Activated T-helper 1 cell treated with anti-CD3 and anti-CD28 coated beads, Interleukin-12 subunit alpha, Interleukin-12 subunit beta, Interleukin-2, Interleukin-4 antibody, amounts not matched to agents 30 ng/mL and 10 ng/mL and 1 ng/mL, durations not matched to agents 14 hours and 24 hours and 36 hours (primary cell): ENCODE measurements at regions of chr2 and their contacts with region 1.

Region 1: GRCh38 chr2:39124000-39124745 is 3.3 kb upstream of the SOS1 start:
- DNase-seq: peak; percentile 94
- H3K4me3 Mint-ChIP-seq: peak overlapping the region; percentile 99
- H3K27ac Mint-ChIP-seq: peak overlapping the region; percentile 100
- H3K4me1 Mint-ChIP-seq: peaks cover 67% of the 10 kb centered on the region
- H3K27me3 Mint-ChIP-seq: no peaks in the 10 kb centered on the region

Region 2: DNA sequence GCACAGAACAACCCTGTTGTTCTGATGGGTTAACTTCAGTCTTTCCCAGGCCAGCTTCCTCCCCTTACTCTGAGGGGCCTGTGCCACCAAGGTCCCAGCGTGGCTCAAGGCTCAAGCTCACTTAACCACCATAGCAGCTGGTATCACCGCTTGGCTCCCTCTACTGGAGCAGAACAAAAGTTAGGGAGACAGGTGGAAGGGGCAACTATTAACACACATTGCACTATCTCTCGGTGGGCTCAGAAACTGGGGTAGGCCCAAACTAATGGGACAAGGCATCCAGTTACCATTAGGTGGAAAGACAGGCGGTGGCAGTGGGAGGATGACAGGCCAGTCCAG is 658.4 kb before region 1 on chr2:
- intact Hi-C with region 1: no loop called
- DNase-seq: no peak
- H3K4me3 Mint-ChIP-seq: no peak overlapping the region
- H3K27ac Mint-ChIP-seq: no peak overlapping the region
- H3K4me1 Mint-ChIP-seq: peaks cover 10% of the 10 kb centered on the region
- H3K27me3 Mint-ChIP-seq: peaks cover 10% of the 10 kb centered on the region

Region 3: GRCh38 chr2:38535744-38536506 is 588.2 kb before region 1 on chr2:
- intact Hi-C with region 1: loop called (anchors 5 kb)
- DNase-seq: peak; percentile 72
- H3K4me3 Mint-ChIP-seq: peak overlapping the region; percentile 67
- H3K27ac Mint-ChIP-seq: no peak overlapping the region
- H3K4me1 Mint-ChIP-seq: no peaks in the 10 kb centered on the region
- H3K27me3 Mint-ChIP-seq: peaks cover 14% of the 10 kb centered on the region

Region 4: DNA sequence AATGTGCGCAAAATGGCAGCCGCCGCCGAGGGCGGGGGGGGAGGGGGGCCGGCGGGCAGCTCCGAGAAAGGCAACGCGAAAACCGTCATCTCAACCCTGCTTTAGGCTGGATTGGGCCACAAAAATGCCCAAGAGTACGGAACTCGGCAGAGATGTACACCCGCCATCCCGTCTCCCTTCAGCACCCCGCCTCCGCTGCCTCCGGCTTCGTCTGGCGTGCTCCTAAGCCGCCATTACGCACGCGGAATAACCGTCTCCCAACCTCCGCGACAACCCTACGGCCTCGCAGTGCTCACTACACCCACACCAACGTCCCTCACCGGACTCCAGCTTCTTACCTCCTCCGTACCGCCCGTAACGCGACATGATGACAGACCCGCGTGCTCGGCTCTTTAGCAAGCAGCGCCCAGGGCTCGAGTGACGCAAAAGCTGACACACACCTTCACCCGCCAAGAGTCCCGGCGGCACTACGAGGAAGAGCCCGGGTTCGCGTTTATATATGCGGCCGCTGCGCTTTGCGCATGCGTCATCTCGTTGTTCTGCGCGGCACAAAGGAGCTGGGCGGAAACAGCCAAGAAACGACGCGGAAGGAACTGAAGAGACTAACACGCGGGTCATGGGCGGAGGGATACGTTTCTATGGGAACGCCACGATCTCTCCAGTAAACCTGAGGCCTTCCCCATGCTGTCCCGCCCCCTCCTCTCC is 373.1 kb before region 1 on chr2 and contains the start of gene SRSF7:
- intact Hi-C with region 1: loop called (anchors 2 kb)
- DNase-seq: peak; percentile 96
- H3K4me3 Mint-ChIP-seq: peak within 1 kb of the TSS; percentile 98
- H3K27ac Mint-ChIP-seq: peak within 1 kb of the TSS; percentile 100
- H3K4me1 Mint-ChIP-seq: peaks cover 54% of the 10 kb centered on the region
- H3K27me3 Mint-ChIP-seq: no peaks in the 10 kb centered on the region
- total RNA-seq, gene SRSF7: 417 and 422 TPM in 2 replicates

Region 5: GRCh38 chr2:39069136-39069515 is 55.0 kb before region 1 on chr2:
- intact Hi-C with region 1: loop called (anchors 2 kb)
- DNase-seq: no peak
- H3K4me3 Mint-ChIP-seq: no peak overlapping the region
- H3K27ac Mint-ChIP-seq: peak overlapping the region; percentile 44
- H3K4me1 Mint-ChIP-seq: peaks cover 44% of the 10 kb centered on the region
- H3K27me3 Mint-ChIP-seq: no peaks in the 10 kb centered on the region

Region 6: DNA sequence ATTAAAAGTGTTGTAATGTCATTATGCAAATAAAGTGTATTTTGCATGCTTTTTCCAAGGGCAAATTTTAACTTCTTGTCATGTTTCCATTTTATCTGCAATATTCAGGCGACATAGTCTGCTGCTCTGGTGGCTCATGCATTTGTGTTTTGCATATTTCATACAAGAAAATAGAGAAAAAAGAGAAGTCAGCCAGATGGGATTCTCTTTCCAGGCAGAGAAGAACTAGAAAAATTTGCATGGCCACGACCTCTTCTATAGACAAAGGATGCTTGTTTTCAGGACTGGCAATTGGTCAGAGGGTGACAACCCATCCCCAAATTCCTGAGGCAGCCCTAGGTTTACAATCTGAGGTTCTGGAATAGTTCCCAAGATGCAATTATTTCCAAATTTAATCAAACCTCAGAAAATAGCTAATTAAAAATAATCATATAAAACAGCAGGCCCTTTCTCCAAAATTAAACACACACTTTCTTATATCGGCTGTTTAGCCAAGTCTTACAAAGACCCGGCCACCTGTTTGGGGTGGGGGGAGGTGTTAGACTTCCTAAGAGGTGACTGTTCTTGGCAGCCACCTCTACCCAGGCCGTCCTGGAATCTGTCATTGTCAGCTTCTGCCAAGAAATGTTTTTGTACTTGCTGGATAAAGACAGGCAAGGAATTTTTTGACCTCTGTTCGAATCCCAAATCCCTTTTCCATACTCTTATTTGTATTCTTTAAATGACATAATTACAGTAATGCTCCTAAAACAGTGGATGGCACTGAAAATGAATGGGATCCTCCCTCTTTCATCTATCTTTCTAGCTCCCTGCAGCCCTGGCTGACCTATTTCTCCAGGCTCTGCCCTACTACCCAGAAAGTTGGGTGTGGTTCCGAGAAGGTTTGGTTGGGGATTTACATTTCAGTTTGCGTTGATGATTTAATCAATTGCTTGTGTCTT is 17.4 kb after region 1 on chr2:
- intact Hi-C with region 1: loop called (anchors 1 kb)
- DNase-seq: peak; percentile 47
- H3K4me3 Mint-ChIP-seq: peak overlapping the region; percentile 55
- H3K27ac Mint-ChIP-seq: peak overlapping the region; percentile 85
- H3K4me1 Mint-ChIP-seq: peaks cover 63% of the 10 kb centered on the region
- H3K27me3 Mint-ChIP-seq: peaks cover 3% of the 10 kb centered on the region

Region 7: DNA sequence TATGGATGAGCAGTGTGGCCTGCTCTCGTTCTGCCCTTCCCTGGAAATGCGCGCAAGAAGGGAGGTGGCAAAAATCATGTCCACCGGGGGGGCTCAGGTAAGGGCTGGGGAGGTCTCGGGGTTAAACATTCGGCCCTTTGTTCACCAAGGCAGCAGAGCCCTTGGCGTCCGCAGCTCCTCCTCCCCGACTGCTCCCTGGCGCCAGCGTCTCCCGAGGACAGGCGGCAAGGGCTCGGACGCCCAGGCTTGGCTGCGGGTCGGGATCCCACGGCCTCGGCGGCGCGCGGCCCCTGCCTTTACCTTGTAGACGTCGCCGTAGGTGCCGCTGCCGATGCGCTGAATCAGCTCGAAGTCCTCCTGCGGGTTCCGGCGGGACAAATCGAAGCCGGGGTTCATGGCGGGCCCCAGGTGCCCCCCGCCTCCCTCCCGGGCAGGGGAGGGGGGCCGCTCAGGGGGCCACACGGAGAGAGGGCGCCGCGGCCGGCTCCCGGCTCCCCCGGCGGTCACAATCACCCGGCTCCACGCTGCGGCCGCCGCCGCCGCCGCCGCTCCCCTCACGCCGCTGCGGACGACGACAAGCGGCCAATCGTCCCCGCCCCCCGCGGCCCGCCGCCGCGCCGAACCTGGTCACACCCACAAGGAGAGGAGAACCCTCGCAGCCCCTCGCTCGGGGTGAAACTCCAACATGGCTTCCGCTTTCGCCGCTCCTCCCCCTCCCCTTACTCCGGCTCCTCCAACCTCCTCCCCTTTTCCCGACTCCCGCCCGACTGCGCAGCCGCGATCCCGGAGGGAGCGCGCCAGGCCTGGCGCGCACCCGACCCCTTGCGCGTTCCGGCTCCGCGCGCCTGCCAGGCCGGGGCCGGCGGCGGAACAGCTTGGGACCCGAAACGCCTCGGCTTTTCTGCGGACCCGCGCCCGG is 312.7 kb after region 1 on chr2 and contains the start of gene MAP4K3:
- intact Hi-C with region 1: loop called (anchors 5 kb)
- DNase-seq: peak; percentile 65
- H3K4me3 Mint-ChIP-seq: peak within 1 kb of the TSS; percentile 96
- H3K27ac Mint-ChIP-seq: peak within 1 kb of the TSS; percentile 86
- H3K4me1 Mint-ChIP-seq: peaks cover 51% of the 10 kb centered on the region
- H3K27me3 Mint-ChIP-seq: no peaks in the 10 kb centered on the region
- total RNA-seq, gene MAP4K3: 15.7 and 24.1 TPM in 2 replicates